Naive thymus-derived CD4-positive, alpha-beta T cell (primary cell): ENCODE measurements at regions of chr2 and their contacts with region 1.

Region 1: GRCh38 chr2:19863303-19864041 is 38.3 kb downstream of the TTC32 start:
- DNase-seq: peak; percentile 28 to 77 (median 66)
- ATAC-seq: peak; percentile 84
- H3K4me3 ChIP-seq: no peak overlapping the region
- H3K4me3 Mint-ChIP-seq: peak overlapping the region in 1 of 10 donors; percentile 34
- H3K27ac ChIP-seq: no peak overlapping the region
- H3K27ac Mint-ChIP-seq: no peak overlapping the region
- H3K4me1 ChIP-seq: peaks cover 10% of the 10 kb centered on the region in 2 donors
- H3K4me1 Mint-ChIP-seq: peaks cover 10 to 17% (median 16%) of the 10 kb centered on the region in 7 donors
- H3K27me3 ChIP-seq: no peaks in the 10 kb centered on the region
- H3K27me3 Mint-ChIP-seq: peaks cover 0 to 13% (median 2%) of the 10 kb centered on the region in 5 donors

Region 2: DNA sequence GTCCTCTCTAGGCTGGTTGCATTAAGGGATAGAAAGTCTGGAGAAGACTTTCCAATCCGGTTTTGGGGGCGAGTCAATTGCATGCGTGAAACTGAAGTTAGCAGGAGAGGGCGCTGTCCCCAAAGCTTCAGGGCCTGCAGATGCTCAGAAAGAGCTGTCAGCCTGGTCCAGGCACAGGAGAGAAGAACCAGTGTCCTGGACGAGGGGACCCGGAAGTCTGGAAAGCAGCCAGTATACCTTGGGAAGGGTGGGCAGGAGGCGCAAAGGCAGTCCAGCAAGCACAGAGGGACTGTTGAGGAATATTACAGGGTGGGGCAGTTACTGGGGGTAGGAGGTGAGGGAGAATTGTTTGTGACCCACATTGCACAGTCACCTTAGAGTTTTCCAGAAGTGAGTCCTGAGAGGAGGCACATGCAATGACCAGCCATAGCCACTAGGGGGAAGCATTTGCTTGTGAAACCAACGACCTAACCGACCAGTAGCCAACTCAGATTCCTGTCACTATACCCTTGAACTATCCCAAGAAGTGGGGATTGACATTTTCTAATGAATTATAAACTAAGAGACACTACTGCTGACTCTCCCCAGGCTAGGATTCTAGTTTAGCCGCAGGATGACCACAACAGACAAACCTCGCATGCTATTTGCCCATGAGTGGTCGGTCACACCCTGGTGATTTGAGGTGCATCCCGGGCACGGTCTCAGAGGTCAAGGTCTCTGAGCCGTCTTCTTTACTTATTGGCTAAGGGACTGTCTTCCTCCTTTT is 1475.8 kb before region 1 on chr2:
- CTCF ChIA-PET with region 1: no interaction called
- POLR2A ChIA-PET with region 1: no interaction called
- intact Hi-C with region 1: loop called in 1 of 2 experiments (anchors 2 kb)
- DNase-seq: peak; percentile 17 to 53 (median 40)
- ATAC-seq: peak; percentile 61
- H3K4me3 ChIP-seq: no peak overlapping the region
- H3K4me3 Mint-ChIP-seq: no peak overlapping the region
- H3K27ac ChIP-seq: no peak overlapping the region
- H3K27ac Mint-ChIP-seq: no peak overlapping the region
- H3K4me1 ChIP-seq: no peaks in the 10 kb centered on the region
- H3K4me1 Mint-ChIP-seq: no peaks in the 10 kb centered on the region
- H3K27me3 ChIP-seq: peaks cover 0 to 3% of the 10 kb centered on the region in 2 donors
- H3K27me3 Mint-ChIP-seq: peaks cover 0 to 7% (median 0%) of the 10 kb centered on the region in 5 donors

Region 3: DNA sequence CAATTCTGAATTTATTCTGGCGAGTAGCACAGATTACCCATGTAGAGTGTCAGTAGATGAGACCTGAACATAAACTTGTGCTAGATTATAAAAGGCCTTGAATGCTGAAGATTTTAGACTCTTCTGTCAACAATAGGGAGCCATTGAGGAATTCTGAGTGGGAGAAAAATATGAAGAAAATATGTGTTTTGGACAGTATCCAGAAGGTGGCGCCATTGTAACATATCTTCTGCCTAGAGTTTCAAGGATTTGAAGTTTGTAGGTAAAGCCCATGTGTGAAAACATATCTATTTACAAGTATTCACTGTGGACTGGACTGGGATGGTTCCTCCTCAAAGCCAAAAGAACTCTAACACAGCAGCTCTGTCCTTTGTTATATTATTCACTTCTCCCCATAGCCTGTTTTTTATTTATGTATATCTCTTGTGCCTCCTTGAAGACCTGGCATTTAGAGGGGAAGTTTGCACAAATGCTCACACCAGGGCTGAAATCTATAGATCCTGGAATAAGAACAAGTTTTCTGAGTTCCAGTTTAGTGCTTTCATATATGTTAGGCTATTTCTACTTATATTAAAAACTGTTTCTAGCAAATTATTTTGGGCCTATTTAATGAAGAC is 1427.9 kb before region 1 on chr2:
- CTCF ChIA-PET with region 1: interaction called, 3 read pairs
- POLR2A ChIA-PET with region 1: no interaction called
- intact Hi-C with region 1: loop called (anchors 1 kb)
- DNase-seq: peak in 3 of 9 donors; percentile 2 to 18 (median 6)
- ATAC-seq: no peak
- H3K4me3 ChIP-seq: no peak overlapping the region
- H3K4me3 Mint-ChIP-seq: no peak overlapping the region
- H3K27ac ChIP-seq: no peak overlapping the region
- H3K27ac Mint-ChIP-seq: no peak overlapping the region
- H3K4me1 ChIP-seq: no peaks in the 10 kb centered on the region
- H3K4me1 Mint-ChIP-seq: no peaks in the 10 kb centered on the region
- H3K27me3 ChIP-seq: no peaks in the 10 kb centered on the region
- H3K27me3 Mint-ChIP-seq: peaks cover 9 to 22% (median 13%) of the 10 kb centered on the region in 5 donors

Region 4: GRCh38 chr2:18749912-18750526 is 1113.5 kb before region 1 on chr2:
- CTCF ChIA-PET with region 1: interaction called, 3 read pairs
- POLR2A ChIA-PET with region 1: no interaction called
- intact Hi-C with region 1: loop called in 1 of 2 experiments (anchors 1 kb)
- DNase-seq: peak in 6 of 9 donors; percentile 19 to 36 (median 22)
- ATAC-seq: no peak
- H3K4me3 ChIP-seq: no peak overlapping the region
- H3K4me3 Mint-ChIP-seq: no peak overlapping the region
- H3K27ac ChIP-seq: no peak overlapping the region
- H3K27ac Mint-ChIP-seq: no peak overlapping the region
- H3K4me1 ChIP-seq: no peaks in the 10 kb centered on the region
- H3K4me1 Mint-ChIP-seq: no peaks in the 10 kb centered on the region
- H3K27me3 ChIP-seq: no peaks in the 10 kb centered on the region
- H3K27me3 Mint-ChIP-seq: no peaks in the 10 kb centered on the region

Region 5: GRCh38 chr2:18883616-18884456 is 979.6 kb before region 1 on chr2:
- CTCF ChIA-PET with region 1: no interaction called
- POLR2A ChIA-PET with region 1: no interaction called
- intact Hi-C with region 1: loop called in 1 of 2 experiments (anchors 10 kb)
- DNase-seq: no peak
- ATAC-seq: no peak
- H3K4me3 ChIP-seq: no peak overlapping the region
- H3K4me3 Mint-ChIP-seq: no peak overlapping the region
- H3K27ac ChIP-seq: no peak overlapping the region
- H3K27ac Mint-ChIP-seq: no peak overlapping the region
- H3K4me1 ChIP-seq: no peaks in the 10 kb centered on the region
- H3K4me1 Mint-ChIP-seq: peaks cover 0 to 2% (median 0%) of the 10 kb centered on the region in 7 donors
- H3K27me3 ChIP-seq: no peaks in the 10 kb centered on the region
- H3K27me3 Mint-ChIP-seq: no peaks in the 10 kb centered on the region